Activated CD8-positive, alpha-beta T cell treated with anti-CD3 and anti-CD28 coated beads for 36 hours (primary cell): ENCODE measurements at regions of chr1 and their contacts with region 1.

Region 1: DNA sequence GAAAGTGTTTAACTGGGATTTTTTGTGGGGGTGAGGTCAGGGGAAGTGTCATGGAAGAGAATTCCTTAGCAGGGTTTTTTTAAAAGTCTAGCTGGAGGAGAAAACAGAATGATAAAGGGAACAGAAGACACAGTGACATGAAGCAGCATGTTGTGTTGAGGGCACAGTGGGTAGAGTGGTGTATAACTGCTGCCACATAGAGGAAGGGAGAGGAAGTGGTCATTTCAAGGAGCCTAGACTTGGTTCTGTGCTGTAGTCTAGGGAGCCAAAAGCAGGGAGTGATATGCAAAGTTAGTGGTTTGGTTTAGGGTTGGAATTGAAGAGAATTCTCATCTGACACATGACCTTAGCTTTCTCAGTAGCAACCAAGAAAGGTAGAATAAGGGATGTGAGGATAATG is 10.2 kb downstream of the EEIG2 start:
- DNase-seq: peak; percentile 47
- ATAC-seq: peak; percentile 96
- H3K4me3 Mint-ChIP-seq: no peak overlapping the region
- H3K27ac Mint-ChIP-seq: no peak overlapping the region
- H3K4me1 Mint-ChIP-seq: peaks cover 9% of the 10 kb centered on the region
- H3K27me3 Mint-ChIP-seq: no peaks in the 10 kb centered on the region
- CTCF ChIP-seq: peak; percentile 62

Region 2: DNA sequence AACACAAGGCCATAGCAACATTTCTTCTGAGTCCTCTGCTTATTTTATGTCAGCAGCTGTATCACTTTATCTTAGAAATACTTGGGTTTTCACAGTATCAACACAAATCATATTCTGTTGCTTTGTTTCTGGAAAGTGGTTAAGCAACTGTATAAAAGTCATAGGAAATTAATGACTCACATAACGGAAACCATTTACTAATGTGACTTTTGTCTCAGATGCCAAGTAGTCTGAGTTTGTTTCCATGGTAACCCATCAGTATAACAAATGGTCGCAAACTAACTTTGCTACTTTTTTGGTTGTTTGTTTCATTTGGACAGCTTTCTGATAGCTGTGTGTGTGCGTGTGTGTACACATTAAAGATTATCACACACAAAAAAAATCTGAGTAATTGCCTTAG is 20.8 kb after region 1 on chr1:
- CTCF ChIA-PET with region 1: interaction called, 3 read pairs
- POLR2A ChIA-PET with region 1: interaction called, 3 read pairs
- intact Hi-C with region 1: loop called (anchors 2 kb)
- DNase-seq: no peak
- ATAC-seq: peak; percentile 84
- H3K4me3 Mint-ChIP-seq: no peak overlapping the region
- H3K27ac Mint-ChIP-seq: no peak overlapping the region
- H3K4me1 Mint-ChIP-seq: peaks cover 61% of the 10 kb centered on the region
- H3K27me3 Mint-ChIP-seq: no peaks in the 10 kb centered on the region
- CTCF ChIP-seq: no peak

Region 3: GRCh38 chr1:108653431-108654105 is 83.4 kb after region 1 on chr1:
- CTCF ChIA-PET with region 1: no interaction called
- POLR2A ChIA-PET with region 1: no interaction called
- intact Hi-C with region 1: no loop called
- DNase-seq: no peak
- ATAC-seq: no peak
- H3K4me3 Mint-ChIP-seq: no peak overlapping the region
- H3K27ac Mint-ChIP-seq: peak overlapping the region; percentile 43
- H3K4me1 Mint-ChIP-seq: peaks cover 25% of the 10 kb centered on the region
- H3K27me3 Mint-ChIP-seq: no peaks in the 10 kb centered on the region
- CTCF ChIP-seq: no peak

Region 4: GRCh38 chr1:108708691-108709660 is 138.8 kb after region 1 on chr1:
- CTCF ChIA-PET with region 1: no interaction called
- POLR2A ChIA-PET with region 1: no interaction called
- intact Hi-C with region 1: no loop called
- DNase-seq: peak; percentile 85
- ATAC-seq: peak; percentile 85
- H3K4me3 Mint-ChIP-seq: no peak overlapping the region
- H3K27ac Mint-ChIP-seq: no peak overlapping the region
- H3K4me1 Mint-ChIP-seq: peaks cover 20% of the 10 kb centered on the region
- H3K27me3 Mint-ChIP-seq: peaks cover 2% of the 10 kb centered on the region
- CTCF ChIP-seq: peak; percentile 68